ENCODE measurements at regions of chr1 and their contacts with region 1.

Region 1: DNA sequence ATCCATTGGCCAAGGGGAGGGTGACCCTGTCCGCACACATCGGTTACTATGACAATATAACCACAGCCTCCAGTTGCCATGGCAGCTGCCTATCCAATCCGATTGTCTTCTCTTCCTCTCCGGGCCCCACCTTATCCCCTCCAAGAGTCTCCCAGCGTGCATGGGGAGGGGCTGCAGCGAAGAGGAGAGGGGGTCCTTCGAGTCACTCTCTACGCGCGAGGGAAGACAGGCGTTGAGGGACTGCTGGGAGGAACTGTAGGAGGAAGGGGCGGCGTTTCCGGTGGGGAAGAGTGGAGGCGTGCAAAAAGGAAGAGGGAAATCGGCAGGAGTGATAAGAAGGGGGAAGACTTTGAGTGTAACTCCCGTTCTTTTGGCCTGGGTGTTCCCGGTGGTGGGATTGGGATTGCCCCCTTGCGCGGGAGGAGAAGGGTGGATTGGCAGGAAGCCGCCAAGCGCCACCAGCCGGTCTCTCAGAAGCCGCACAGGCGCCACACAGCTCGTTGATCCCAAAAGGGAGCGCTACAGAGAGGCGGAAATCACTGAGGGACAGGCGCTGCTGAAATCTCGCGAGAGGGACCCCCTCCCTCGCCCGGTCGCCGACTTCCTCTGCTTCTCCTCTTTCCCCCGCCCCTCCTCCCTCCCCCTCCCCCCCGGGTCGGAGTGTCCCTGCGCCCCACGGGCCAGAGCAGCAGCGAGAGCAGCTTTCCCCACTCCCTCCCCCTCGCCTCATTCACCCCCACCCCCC is 384 bp upstream of the SMG7 start:
- DNase-seq: peak; percentile 94 to 99 (median 97)
- H3K4me3 ChIP-seq: peak overlapping the region; percentile 67 to 100 (median 95)
- H3K27ac ChIP-seq: peak overlapping the region; percentile 88 to 100 (median 97)
- H3K27me3 ChIP-seq: no peaks in the 10 kb centered on the region
- CTCF ChIP-seq: peak in 50 of 56 donors; percentile 15 to 64 (median 40)

Region 2: DNA sequence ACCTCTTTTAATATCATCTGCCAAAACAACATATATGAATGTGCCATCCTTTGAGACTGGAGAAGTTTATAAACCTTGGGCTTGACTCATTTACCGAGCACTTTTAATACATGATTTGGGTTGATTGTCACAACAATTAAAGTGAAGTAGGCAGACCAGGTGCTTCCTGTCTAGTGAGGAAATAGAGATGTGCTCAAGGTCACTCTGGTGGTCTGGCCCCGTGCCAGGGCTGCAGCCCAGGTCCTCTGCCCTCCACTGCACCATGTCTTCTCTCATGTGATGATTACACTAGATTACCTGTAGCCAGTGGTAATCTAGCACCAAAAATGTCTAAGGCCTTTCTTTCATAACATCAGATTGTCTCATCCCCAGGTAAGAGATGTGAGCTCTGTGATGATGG is 347.7 kb before region 1 on chr1:
- intact Hi-C with region 1: no loop called
- DNase-seq: no peak
- H3K4me3 ChIP-seq: no peak overlapping the region
- H3K27ac ChIP-seq: no peak overlapping the region
- H3K27me3 ChIP-seq: no peaks in the 10 kb centered on the region
- CTCF ChIP-seq: no peak

Region 3: DNA sequence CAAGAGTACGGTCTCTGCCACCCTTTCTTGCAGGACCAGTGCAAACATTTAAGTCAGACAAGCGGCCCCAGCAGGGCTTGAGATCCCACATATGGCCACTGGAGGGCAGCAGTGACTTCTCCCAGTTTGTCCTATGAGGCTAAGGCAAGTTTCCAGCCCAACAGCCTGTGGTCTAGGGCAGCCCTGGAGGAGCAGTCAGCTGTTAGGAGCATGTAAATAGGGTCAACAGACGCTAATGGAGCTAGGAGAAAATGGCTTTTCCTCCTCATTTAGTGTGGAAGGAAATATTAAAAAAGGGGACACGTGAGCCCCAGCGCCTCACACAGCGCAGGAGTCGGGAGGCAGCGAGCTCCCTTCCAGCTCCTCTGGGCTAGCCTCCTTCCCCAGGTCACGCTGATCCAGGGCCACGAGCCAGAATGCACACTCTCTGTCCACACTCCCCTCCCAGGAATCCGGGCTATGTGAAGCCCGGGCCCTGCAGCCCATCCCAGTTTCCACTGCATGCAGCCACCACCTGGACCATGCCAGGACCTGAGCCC is 190.3 kb before region 1 on chr1:
- intact Hi-C with region 1: loop called (anchors 5 kb)
- DNase-seq: peak; percentile 80 to 93 (median 88)
- H3K4me3 ChIP-seq: peak overlapping the region in 17 of 59 donors; percentile 4 to 41 (median 23)
- H3K27ac ChIP-seq: peak overlapping the region in 13 of 59 donors; percentile 1 to 70 (median 46)
- H3K27me3 ChIP-seq: no peaks in the 10 kb centered on the region
- CTCF ChIP-seq: peak; percentile 75 to 97 (median 92)

Region 4: GRCh38 chr1:183416850-183417771 is 54.8 kb before region 1 on chr1:
- intact Hi-C with region 1: loop called in 1 of 2 experiments (anchors 5 kb)
- DNase-seq: peak; percentile 40 to 80 (median 70)
- H3K4me3 ChIP-seq: peak overlapping the region; percentile 42 to 82 (median 67)
- H3K27ac ChIP-seq: peak overlapping the region in 37 of 59 donors; percentile 7 to 83 (median 64)
- H3K27me3 ChIP-seq: peaks cover 0 to 15% (median 0%) of the 10 kb centered on the region in 45 donors
- CTCF ChIP-seq: peak in 12 of 56 donors; percentile 7 to 23 (median 18)

Region 5: GRCh38 chr1:183432548-183432875 is 39.4 kb before region 1 on chr1:
- intact Hi-C with region 1: no loop called
- DNase-seq: no peak
- H3K4me3 ChIP-seq: no peak overlapping the region
- H3K27ac ChIP-seq: no peak overlapping the region
- H3K27me3 ChIP-seq: peaks cover 0 to 3% (median 0%) of the 10 kb centered on the region in 45 donors
- CTCF ChIP-seq: no peak

Region 6: DNA sequence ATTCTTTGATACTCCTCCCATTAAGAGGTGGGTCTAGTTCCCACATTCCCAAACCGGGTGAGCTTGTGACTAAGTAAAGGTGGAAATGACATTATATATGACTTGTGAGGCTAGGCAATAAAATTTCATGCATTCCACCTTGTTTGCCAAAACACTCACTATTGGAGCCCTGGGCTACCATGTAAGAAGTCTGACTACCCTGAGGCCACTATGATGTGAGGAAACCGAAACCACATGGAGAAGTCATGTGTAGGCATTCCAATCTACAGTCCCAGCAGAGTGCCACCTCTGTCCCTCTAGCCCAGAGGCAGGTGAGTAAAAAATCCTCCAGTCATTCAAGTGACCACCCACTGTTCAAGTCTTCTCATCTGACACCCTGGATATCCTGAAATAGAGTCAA is 17.5 kb before region 1 on chr1:
- intact Hi-C with region 1: no loop called
- DNase-seq: no peak
- H3K4me3 ChIP-seq: no peak overlapping the region
- H3K27ac ChIP-seq: no peak overlapping the region
- H3K27me3 ChIP-seq: peaks cover 0 to 6% (median 0%) of the 10 kb centered on the region in 45 donors
- CTCF ChIP-seq: no peak

Region 7: DNA sequence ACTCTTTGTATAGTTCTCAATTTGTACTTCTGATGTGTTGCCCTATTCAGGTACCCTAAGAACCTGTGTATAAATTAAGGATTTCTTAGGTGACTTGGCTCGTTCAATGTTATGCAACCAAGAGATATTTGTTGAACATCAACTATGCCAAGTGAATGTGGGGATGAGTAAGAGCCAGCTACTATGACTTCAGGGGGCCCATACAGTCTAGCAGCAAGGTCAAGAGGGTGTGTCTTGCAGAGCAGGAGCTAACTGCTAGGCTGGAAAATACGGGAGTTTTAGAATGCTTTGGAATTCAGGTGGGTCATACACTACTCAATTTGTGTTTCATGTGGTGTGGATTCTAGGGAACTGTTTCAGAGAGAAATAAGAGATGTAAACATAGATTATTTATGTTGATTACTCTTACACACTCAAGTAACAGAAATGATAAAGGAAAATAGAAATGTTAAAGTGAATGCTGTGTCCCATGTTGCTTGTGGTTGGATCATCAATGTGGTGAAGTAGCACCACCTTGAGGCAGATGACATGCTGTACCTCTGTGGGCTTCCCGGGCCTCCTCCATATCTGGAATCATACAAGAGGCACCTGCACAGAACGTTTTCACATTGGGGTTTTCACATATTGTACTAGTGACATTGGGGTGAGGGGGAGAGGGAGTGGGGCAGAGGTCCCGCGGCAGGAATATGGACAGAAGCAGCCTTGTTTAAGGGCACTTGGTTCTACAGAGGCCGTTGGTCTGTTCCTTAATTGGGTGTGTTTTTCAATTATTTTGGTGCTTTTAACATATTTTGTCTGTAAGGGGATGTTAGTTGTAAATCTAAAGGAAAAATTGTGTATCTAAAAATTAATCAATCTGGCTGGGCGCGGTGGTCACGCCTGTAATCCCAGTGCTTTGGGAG is 151.2 kb after region 1 on chr1:
- intact Hi-C with region 1: loop called (anchors 2 to 5 kb)
- DNase-seq: peak in 7 of 10 donors; percentile 49 to 76 (median 63)
- H3K4me3 ChIP-seq: no peak overlapping the region
- H3K27ac ChIP-seq: peak overlapping the region in 42 of 59 donors; percentile 1 to 74 (median 52)
- H3K27me3 ChIP-seq: no peaks in the 10 kb centered on the region
- CTCF ChIP-seq: peak; percentile 22 to 86 (median 74)

Region 8: DNA sequence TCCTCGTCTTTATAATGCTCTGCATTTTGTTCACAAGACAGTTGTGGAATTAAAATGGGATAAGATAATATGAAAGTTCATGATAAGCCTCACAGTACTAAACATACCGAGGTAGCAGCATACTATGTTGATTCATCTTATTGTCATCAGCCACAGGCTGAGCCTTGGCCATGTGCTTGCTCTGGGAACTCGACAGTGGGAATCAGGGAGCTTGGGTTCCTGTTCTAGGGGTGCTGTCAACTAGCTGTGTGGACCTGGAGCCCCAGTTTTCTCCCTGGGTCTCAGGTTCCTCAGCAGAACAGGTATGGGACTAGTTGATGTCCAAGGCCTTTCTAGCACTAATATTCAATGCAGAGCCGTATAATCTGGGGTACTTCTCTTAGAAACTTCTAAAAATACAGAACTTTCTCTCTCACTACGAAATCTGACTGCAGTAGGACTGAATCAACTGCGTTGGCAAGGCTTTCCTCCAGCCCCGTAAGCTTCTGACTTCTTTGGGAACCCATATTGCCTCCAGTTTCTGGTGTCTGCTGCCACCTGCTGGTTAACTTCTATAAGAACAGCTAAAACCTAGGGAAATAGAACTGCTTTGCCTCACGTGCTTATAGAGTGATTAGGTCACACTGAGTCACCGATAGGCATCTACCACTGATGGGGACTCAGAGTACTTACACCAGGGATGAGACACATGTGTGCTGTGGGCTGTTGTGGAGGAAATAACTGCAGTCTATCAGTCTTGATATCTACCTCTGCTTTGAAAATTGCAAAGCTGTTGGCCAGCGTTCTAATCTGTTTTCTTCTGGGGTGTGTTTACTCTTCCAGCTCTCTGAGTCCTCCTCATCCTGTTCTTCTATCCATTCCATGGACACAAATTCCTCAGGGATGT is 444.0 kb after region 1 on chr1:
- intact Hi-C with region 1: loop called in 1 of 2 experiments (anchors 2 kb)
- DNase-seq: peak in 8 of 10 donors; percentile 65 to 82 (median 72)
- H3K4me3 ChIP-seq: peak overlapping the region in 17 of 59 donors; percentile 4 to 44 (median 21)
- H3K27ac ChIP-seq: peak overlapping the region; percentile 20 to 100 (median 96)
- H3K27me3 ChIP-seq: no peaks in the 10 kb centered on the region
- CTCF ChIP-seq: peak; percentile 88 to 100 (median 95)